ENCODE measurements at regions of chr6 and their contacts with region 1.

Region 1: GRCh38 chr6:446418-447366 is 55.1 kb downstream of the IRF4 start:
- DNase-seq: peak; percentile 88
- H3K4me3 Mint-ChIP-seq: peak overlapping the region; percentile 37
- H3K27ac Mint-ChIP-seq: peak overlapping the region; percentile 91
- H3K4me1 Mint-ChIP-seq: peaks cover 70% of the 10 kb centered on the region
- H3K27me3 Mint-ChIP-seq: no peaks in the 10 kb centered on the region

Region 2: DNA sequence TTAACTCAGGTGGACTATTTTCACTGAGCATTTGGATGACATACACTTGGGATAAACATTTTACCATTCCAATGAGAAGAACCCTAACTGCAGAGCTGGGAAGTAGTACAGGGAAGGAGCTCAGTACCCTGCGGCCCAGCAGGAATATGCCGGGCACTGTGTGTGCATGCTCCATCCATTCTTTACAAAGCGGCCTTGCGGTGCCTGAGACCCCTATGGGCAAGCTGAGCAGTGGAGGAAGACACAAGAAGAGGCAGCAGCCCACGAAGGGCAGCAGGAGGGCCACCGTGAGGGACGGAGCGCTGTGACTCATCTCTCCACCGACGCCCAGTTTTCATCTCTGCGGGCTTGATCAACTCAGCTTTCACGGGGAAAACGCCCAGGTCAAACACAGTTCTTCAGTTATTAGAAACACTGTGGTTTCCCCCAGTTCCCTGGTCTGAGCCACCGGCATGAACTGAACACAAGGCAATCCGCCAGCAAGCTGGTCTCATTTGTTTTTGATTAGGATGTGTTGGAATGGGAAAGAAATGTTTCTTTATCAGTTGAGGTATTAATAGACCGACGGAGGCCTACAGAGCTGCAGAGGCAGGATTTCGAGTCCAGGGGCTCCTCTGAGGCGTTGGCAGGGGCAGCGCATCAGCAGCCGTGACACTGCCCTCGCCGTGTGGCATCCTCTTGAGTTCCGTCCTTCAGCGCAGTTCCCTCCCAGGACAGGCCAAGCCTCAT is 10.2 kb before region 1 on chr6:
- CTCF ChIA-PET with region 1: interaction called, 49 read pairs
- POLR2A ChIA-PET with region 1: interaction called, 3 read pairs
- DNase-seq: no peak
- H3K4me3 Mint-ChIP-seq: no peak overlapping the region
- H3K27ac Mint-ChIP-seq: peak overlapping the region; percentile 16
- H3K4me1 Mint-ChIP-seq: peaks cover 45% of the 10 kb centered on the region
- H3K27me3 Mint-ChIP-seq: no peaks in the 10 kb centered on the region

Measured in activated CD4-positive, alpha-beta T cell treated with anti-CD3 and anti-CD28 coated beads, Interleukin-2, amount 10 ng/mL, durations not matched to agents 7 days and 5 days (primary cell).